ENCODE measurements at regions of chr5 and their contacts with region 1.

Region 1: GRCh38 chr5:134527146-134527960 is 1.9 kb downstream of the JADE2 start:
- DNase-seq: peak; percentile 86 to 89
- ATAC-seq: peak; percentile 68 to 77 (median 72)
- H3K4me3 ChIP-seq: peak overlapping the region; percentile 94
- H3K27ac ChIP-seq: peak overlapping the region; percentile 89
- H3K4me1 ChIP-seq: peaks cover 40% of the 10 kb centered on the region
- H3K27me3 ChIP-seq: no peaks in the 10 kb centered on the region
- CTCF ChIP-seq: peak; percentile 71

Region 2: GRCh38 chr5:134370871-134371833 is 156.2 kb before region 1 on chr5 and contains the start of gene UBE2B:
- intact Hi-C with region 1: loop called in 1 of 2 experiments (anchors 2 kb)
- DNase-seq: peak; percentile 97 to 98
- ATAC-seq: peak; percentile 82 to 87 (median 84)
- H3K4me3 ChIP-seq: peak within 1 kb of the TSS; percentile 100
- H3K27ac ChIP-seq: peak within 1 kb of the TSS; percentile 100
- H3K4me1 ChIP-seq: peaks cover 40% of the 10 kb centered on the region
- H3K27me3 ChIP-seq: no peaks in the 10 kb centered on the region
- CTCF ChIP-seq: no peak
- total RNA-seq, gene UBE2B: 178 to 296 (median 222) TPM

Region 3: DNA sequence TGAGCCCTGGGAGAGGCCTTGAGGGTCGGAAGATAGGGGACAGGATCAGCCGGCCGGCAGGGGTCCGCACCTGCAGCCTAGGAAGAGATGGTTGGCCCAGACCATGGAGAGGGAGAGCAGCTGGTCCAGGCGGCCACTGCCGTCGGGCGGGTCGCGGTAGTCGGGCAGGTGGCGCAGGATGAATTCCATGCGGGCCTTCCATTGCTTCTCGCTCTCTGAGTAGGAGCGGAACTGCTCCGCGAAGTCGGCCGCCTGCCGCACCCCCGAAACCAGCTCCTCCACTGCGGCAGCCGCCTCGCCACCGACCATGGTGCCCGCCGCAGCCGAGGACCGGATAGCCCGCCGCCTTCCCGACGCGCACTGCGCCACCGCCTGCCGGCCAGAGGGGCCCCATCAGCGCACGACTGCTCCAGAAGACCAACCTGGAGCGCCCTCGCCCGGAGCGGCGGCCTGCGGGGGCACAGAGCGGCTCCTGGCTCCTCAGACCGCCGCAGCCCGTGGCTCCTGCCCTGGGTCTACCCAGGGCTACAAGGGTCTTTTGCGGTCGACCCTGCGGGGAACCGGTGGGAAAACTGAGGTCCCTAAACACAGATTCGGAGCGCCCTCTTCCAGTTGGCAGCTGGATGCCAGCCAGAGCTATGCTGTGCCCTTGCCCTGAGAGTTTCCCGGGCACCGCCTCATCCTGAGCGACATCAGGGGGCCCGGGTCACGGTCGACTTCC is 115.6 kb before region 1 on chr5 and contains the start of gene CDKN2AIPNL:
- intact Hi-C with region 1: loop called (anchors 5 kb)
- DNase-seq: peak; percentile 91 to 95
- ATAC-seq: peak; percentile 97 to 99 (median 98)
- H3K4me3 ChIP-seq: peak within 1 kb of the TSS; percentile 88
- H3K27ac ChIP-seq: peak within 1 kb of the TSS; percentile 90
- H3K4me1 ChIP-seq: peaks cover 24% of the 10 kb centered on the region
- H3K27me3 ChIP-seq: no peaks in the 10 kb centered on the region
- CTCF ChIP-seq: peak; percentile 72
- total RNA-seq, gene CDKN2AIPNL: 31.4 to 45.4 (median 39.8) TPM

Region 4: DNA sequence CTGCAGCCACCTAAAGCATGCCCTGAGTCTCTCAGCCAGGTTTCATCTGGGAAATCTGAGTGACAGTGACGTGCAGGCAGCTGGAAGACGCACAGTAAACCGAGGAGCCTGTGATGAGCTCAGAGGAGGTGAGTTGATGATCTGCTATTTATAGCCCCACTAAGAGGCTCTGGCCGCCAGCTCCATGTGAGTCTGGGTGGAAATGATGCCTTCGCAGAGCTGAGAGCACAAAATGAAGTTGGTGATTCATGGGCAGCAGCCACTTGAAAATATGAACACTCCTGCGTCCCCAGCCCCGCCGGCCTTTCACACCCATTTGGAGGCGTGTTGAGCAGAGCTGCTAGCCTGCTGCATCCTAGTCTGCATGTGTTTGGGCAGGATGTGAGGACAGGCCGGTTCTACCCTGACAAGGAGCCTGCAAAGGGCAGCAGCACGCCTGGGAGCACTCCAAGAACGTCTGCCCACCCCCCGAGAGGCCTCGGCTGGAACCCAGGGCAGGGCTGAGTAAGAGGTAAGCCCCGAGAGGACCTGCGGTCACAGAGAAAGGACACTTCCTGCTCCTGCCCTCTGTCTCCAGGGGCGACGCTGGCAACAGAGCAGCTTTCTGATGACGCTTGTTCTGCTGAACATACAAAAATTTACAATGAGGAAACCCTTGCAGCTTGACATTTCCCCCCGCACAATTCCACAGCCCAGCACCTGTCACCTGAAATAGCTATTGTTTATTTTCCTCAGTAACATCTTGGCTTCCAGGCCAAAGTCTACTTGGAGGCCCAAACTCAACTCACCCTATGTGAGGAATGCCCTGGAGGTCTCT is 90.6 kb before region 1 on chr5:
- intact Hi-C with region 1: loop called in 1 of 2 experiments (anchors 2 kb)
- DNase-seq: peak; percentile 84 to 89
- ATAC-seq: peak; percentile 77 to 89 (median 81)
- H3K4me3 ChIP-seq: peak overlapping the region; percentile 42
- H3K27ac ChIP-seq: peak overlapping the region; percentile 98
- H3K4me1 ChIP-seq: peaks cover 68% of the 10 kb centered on the region
- H3K27me3 ChIP-seq: no peaks in the 10 kb centered on the region
- CTCF ChIP-seq: no peak

Region 5: GRCh38 chr5:134479839-134480238 is 47.5 kb before region 1 on chr5:
- intact Hi-C with region 1: no loop called
- DNase-seq: no peak
- ATAC-seq: no peak
- H3K4me3 ChIP-seq: no peak overlapping the region
- H3K27ac ChIP-seq: no peak overlapping the region
- H3K4me1 ChIP-seq: no peaks in the 10 kb centered on the region
- H3K27me3 ChIP-seq: no peaks in the 10 kb centered on the region
- CTCF ChIP-seq: no peak

Region 6: DNA sequence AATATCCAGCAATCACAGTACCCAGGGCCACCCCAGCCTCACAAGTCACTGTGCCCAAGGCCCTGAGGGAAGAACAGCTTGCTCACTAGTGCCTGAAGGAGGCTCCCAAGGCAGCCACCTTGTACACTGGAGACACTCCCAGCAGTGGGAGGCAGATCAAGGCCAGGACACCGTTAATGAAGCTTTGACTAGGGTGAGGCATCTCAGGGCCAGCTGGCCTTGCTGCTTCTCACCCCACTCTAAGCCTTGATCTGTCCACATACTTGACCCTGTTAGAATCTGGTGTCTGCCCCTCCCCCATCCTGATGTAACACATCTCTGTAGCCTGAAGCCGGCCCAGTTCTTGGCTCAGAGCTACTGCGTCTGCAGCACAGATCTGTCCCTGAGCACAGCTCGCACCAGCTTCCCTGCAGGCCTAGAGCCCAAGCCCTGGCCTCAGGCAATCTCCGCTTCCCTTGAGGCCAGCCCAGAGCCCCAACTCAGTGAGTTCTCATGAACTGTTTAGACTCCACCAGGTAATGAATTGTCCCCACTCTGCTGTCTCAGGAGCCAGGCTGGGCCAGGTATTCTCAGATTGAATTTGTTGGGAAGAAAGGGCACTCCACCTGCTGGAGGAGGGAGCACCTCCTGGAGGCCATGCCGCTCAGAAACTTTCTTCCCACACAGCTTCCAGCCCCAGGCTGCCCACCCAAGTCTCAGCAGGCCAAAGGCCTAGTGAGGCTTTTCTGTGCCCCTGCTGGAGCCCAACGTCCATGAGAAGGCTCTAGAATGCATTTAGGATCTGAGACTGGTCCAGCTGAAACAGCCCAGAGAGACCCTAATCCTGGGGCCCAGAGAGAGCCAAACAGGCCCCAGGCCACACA is 15.3 kb before region 1 on chr5:
- intact Hi-C with region 1: no loop called
- DNase-seq: peak; percentile 89 to 94
- ATAC-seq: peak; percentile 88 to 91 (median 90)
- H3K4me3 ChIP-seq: no peak overlapping the region
- H3K27ac ChIP-seq: peak overlapping the region; percentile 76
- H3K4me1 ChIP-seq: peaks cover 41% of the 10 kb centered on the region
- H3K27me3 ChIP-seq: no peaks in the 10 kb centered on the region
- CTCF ChIP-seq: peak; percentile 41

Region 7: DNA sequence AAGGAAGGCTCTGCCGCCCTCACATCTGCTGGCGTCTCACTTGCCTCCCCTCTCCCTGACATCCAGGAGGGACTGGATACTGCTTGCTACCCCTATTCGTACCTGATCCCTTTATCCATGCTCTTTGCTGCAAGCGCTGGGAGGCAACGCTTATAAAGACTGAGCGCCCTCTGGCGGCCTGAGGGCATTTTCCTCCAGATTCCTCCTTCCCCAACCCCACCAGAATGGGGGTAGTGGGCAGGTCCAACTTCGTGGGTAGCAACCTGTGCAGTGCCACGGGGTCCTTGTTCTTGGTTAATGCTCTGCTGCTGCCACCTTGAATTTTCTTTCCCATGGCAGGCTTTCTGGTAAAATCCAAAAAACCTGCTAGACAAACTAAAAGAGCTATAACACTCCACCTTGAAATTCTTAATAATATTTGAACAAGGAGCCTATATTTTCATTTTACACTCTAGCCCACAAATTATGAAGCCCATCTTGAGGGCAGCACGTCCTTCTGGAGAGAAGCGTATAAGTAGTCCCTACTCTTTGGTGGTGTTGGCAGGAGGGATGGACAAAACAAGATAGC is 50.5 kb after region 1 on chr5:
- intact Hi-C with region 1: loop called in 1 of 2 experiments (anchors 2 kb)
- DNase-seq: peak; percentile 83 to 90
- ATAC-seq: peak; percentile 62 to 71 (median 66)
- H3K4me3 ChIP-seq: no peak overlapping the region
- H3K27ac ChIP-seq: no peak overlapping the region
- H3K4me1 ChIP-seq: peaks cover 32% of the 10 kb centered on the region
- H3K27me3 ChIP-seq: no peaks in the 10 kb centered on the region
- CTCF ChIP-seq: peak; percentile 83

Region 8: DNA sequence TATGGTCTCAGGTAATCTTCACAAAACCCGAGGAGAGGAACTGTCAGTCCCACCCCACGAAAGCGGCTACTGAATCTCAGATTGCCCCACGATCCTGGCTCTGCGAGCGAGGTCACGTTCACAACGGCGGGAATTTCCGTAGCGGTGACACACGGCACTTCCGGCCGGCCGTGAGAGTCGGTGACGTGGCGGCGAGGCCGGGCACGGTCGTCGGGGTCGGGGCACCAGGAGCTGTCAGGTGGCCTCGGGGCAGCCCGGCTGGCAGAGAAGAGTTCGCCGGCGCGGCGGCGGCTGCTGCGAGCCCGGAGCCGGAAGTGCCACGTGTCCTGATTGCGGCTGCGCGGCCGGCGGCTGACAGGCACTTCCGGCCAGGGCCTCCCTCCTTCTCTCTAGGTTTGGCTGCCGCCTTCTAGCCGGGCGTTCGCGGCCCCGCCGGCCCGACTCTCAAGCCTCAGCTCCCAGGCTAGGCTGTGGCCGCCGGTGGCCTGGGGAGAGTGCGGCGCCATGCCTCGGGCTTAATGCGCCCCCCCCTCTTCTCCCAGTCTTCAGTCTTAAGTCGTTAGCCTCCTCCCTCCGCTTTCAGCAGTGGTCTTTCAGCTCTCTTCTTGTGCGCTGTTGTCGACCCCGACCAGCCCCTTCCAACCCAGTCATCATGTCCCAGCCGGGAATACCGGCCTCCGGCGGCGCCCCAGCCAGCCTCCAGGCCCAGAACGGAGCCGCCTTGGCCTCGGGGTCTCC is 121.2 kb after region 1 on chr5 and contains the start of gene SEC24A:
- intact Hi-C with region 1: loop called in 1 of 2 experiments (anchors 5 kb)
- DNase-seq: peak; percentile 95 to 97
- ATAC-seq: peak; percentile 93 to 96 (median 94)
- H3K4me3 ChIP-seq: peak within 1 kb of the TSS; percentile 98
- H3K27ac ChIP-seq: peak within 1 kb of the TSS; percentile 99
- H3K4me1 ChIP-seq: peaks cover 26% of the 10 kb centered on the region
- H3K27me3 ChIP-seq: no peaks in the 10 kb centered on the region
- CTCF ChIP-seq: no peak
- total RNA-seq, gene SEC24A: 5.7 to 25.2 (median 13.7) TPM